ENCODE measurements at regions of chr14 and their contacts with region 1.

Region 1: GRCh38 chr14:71720978-71721624 is 211.1 kb upstream of the RGS6 start:
- DNase-seq: peak; percentile 38 to 64
- H3K4me3 ChIP-seq: no peak overlapping the region
- H3K27ac ChIP-seq: no peak overlapping the region
- H3K4me1 ChIP-seq: no peaks in the 10 kb centered on the region
- H3K27me3 ChIP-seq: no peaks in the 10 kb centered on the region
- CTCF ChIP-seq: peak; percentile 42 to 75 (median 73)
- EP300 ChIP-seq: no peak
- POLR2A ChIP-seq: no peak
- RAD21 ChIP-seq: peak; percentile 89 to 92

Region 2: DNA sequence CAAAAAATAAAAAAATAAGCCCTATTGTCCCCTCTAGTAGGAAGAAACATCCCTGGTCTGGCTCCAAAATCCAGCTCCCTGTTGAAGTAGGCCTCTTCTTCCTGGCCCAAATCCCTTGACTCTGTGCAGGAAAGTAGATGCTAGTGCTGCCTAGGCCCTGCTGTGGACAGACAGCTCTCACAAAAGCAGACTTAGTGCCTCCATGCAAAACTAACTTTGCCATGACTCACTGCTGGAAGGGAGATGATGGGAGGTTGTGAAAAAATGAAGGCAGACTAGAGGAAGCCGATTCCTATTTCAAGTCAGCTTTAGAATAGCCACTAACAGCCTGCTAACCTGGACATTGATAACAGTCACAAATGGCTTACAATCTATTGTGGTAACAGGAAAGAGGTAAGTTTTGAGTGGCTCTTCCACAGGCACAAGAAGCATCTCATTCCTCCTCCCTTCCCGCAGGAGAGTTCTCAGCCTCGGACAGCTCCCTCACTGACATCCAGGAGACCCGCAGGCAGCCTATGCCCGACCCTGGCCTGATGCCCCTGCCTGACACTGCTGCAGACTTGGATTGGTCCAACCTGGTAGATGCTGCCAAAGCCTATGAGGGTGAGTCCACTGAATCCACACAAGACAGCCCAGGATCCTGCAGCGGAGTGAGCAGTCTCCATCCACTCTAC is 12.2 kb after region 1 on chr14:
- CTCF ChIA-PET with region 1: interaction called, 36 read pairs
- POLR2A ChIA-PET with region 1: no interaction called
- DNase-seq: no peak
- H3K4me3 ChIP-seq: no peak overlapping the region
- H3K27ac ChIP-seq: no peak overlapping the region
- H3K4me1 ChIP-seq: no peaks in the 10 kb centered on the region
- H3K27me3 ChIP-seq: no peaks in the 10 kb centered on the region
- CTCF ChIP-seq: no peak
- EP300 ChIP-seq: no peak
- POLR2A ChIP-seq: no peak
- RAD21 ChIP-seq: no peak

Region 3: GRCh38 chr14:71739273-71739937 is 18.3 kb after region 1 on chr14:
- CTCF ChIA-PET with region 1: interaction called, 36 read pairs
- POLR2A ChIA-PET with region 1: no interaction called
- DNase-seq: no peak
- H3K4me3 ChIP-seq: no peak overlapping the region
- H3K27ac ChIP-seq: no peak overlapping the region
- H3K4me1 ChIP-seq: no peaks in the 10 kb centered on the region
- H3K27me3 ChIP-seq: no peaks in the 10 kb centered on the region
- CTCF ChIP-seq: no peak
- EP300 ChIP-seq: no peak
- POLR2A ChIP-seq: no peak
- RAD21 ChIP-seq: no peak